ENCODE measurements at regions of chr21 and their contacts with region 1.

Region 1: GRCh38 chr21:26637201-26637745 is 64.2 kb upstream of the CYYR1 start:
- DNase-seq: no peak
- H3K4me3 Mint-ChIP-seq: no peak overlapping the region
- H3K27ac Mint-ChIP-seq: no peak overlapping the region
- H3K4me1 Mint-ChIP-seq: no peaks in the 10 kb centered on the region
- H3K27me3 Mint-ChIP-seq: no peaks in the 10 kb centered on the region

Region 2: GRCh38 chr21:26674323-26674722 is 37.0 kb after region 1 on chr21:
- intact Hi-C with region 1: loop called (anchors 1 kb)
- DNase-seq: no peak
- H3K4me3 Mint-ChIP-seq: no peak overlapping the region
- H3K27ac Mint-ChIP-seq: no peak overlapping the region
- H3K4me1 Mint-ChIP-seq: no peaks in the 10 kb centered on the region
- H3K27me3 Mint-ChIP-seq: no peaks in the 10 kb centered on the region

Measured in activated T-helper 1 cell treated with anti-CD3 and anti-CD28 coated beads, Interleukin-12 subunit alpha, Interleukin-12 subunit beta, Interleukin-2, Interleukin-4 antibody, amounts not matched to agents 30 ng/mL and 10 ng/mL and 1 ng/mL, durations not matched to agents 14 hours and 24 hours and 36 hours (primary cell).